Naive thymus-derived CD4-positive, alpha-beta T cell (primary cell): ENCODE measurements at regions of chr7 and their contacts with region 1.

Region 1: GRCh38 chr7:78437118-78437517 is 638.5 kb downstream of the PHTF2 start:
- DNase-seq: no peak
- ATAC-seq: no peak
- H3K4me3 ChIP-seq: no peak overlapping the region
- H3K4me3 Mint-ChIP-seq: no peak overlapping the region
- H3K27ac ChIP-seq: no peak overlapping the region
- H3K27ac Mint-ChIP-seq: no peak overlapping the region
- H3K4me1 ChIP-seq: no peaks in the 10 kb centered on the region
- H3K4me1 Mint-ChIP-seq: no peaks in the 10 kb centered on the region
- H3K27me3 ChIP-seq: no peaks in the 10 kb centered on the region
- H3K27me3 Mint-ChIP-seq: peaks cover 0 to 6% (median 0%) of the 10 kb centered on the region in 5 donors

Region 2: DNA sequence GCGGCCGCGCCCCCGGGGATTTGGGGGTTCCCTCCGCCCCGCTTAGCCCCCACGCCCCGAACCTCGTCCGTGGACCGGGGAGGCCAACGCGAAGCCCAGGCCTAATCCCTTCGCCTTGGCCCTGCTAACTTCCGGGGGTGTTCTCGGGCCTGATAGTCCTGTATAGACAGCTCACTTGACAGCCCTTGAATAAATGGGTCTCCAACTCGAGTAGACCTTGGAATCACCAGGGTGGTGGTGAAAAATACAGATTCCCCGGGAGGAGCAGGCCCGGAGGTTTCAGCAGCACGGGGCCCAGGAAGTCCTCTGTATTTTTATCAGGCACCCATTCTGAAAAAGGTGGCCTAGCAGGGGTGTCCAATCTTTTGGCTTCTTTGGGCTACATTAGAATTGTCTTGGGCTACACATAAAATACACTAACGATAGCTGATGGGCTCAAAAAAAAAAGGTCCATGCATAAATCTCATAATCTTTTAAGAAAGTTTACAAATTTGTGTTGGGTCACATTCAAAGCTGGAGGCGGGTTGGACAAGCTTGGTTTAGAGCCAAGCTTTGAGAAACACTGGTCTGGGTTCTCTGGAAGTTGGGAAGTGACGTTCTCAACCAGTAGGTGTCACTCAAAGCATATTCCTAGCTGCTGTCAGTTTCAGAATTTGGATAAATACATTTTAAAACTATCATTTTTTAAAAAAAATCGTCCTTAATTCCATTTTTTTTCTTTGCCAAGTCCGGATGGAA is 416.8 kb before region 1 on chr7:
- CTCF ChIA-PET with region 1: no interaction called
- POLR2A ChIA-PET with region 1: no interaction called
- intact Hi-C with region 1: loop called in 1 of 2 experiments (anchors 10 kb)
- DNase-seq: peak in 5 of 9 donors; percentile 18 to 44 (median 25)
- ATAC-seq: peak; percentile 63
- H3K4me3 ChIP-seq: peak overlapping the region; percentile 31
- H3K4me3 Mint-ChIP-seq: peak overlapping the region; percentile 72 to 88 (median 83)
- H3K27ac ChIP-seq: no peak overlapping the region
- H3K27ac Mint-ChIP-seq: peak overlapping the region in 2 of 9 donors; percentile 28 to 56
- H3K4me1 ChIP-seq: peaks cover 0 to 7% of the 10 kb centered on the region in 2 donors
- H3K4me1 Mint-ChIP-seq: peaks cover 6 to 15% (median 11%) of the 10 kb centered on the region in 7 donors
- H3K27me3 ChIP-seq: peaks cover 0 to 13% of the 10 kb centered on the region in 2 donors
- H3K27me3 Mint-ChIP-seq: peaks cover 17 to 53% (median 39%) of the 10 kb centered on the region in 5 donors

Region 3: GRCh38 chr7:78226059-78226719 is 210.9 kb before region 1 on chr7:
- CTCF ChIA-PET with region 1: no interaction called
- POLR2A ChIA-PET with region 1: no interaction called
- intact Hi-C with region 1: no loop called
- DNase-seq: no peak
- ATAC-seq: no peak
- H3K4me3 ChIP-seq: no peak overlapping the region
- H3K4me3 Mint-ChIP-seq: no peak overlapping the region
- H3K27ac ChIP-seq: no peak overlapping the region
- H3K27ac Mint-ChIP-seq: no peak overlapping the region
- H3K4me1 ChIP-seq: no peaks in the 10 kb centered on the region
- H3K4me1 Mint-ChIP-seq: no peaks in the 10 kb centered on the region
- H3K27me3 ChIP-seq: no peaks in the 10 kb centered on the region
- H3K27me3 Mint-ChIP-seq: peaks cover 0 to 19% (median 14%) of the 10 kb centered on the region in 5 donors

Region 4: GRCh38 chr7:78399033-78399769 is 37.9 kb before region 1 on chr7:
- CTCF ChIA-PET with region 1: no interaction called
- POLR2A ChIA-PET with region 1: no interaction called
- intact Hi-C with region 1: no loop called
- DNase-seq: no peak
- ATAC-seq: no peak
- H3K4me3 ChIP-seq: no peak overlapping the region
- H3K4me3 Mint-ChIP-seq: no peak overlapping the region
- H3K27ac ChIP-seq: no peak overlapping the region
- H3K27ac Mint-ChIP-seq: no peak overlapping the region
- H3K4me1 ChIP-seq: no peaks in the 10 kb centered on the region
- H3K4me1 Mint-ChIP-seq: no peaks in the 10 kb centered on the region
- H3K27me3 ChIP-seq: no peaks in the 10 kb centered on the region
- H3K27me3 Mint-ChIP-seq: peaks cover 0 to 4% (median 0%) of the 10 kb centered on the region in 5 donors